Posterior cingulate gyrus (tissue), 11 donors: ENCODE measurements at regions of chr9 and their contacts with region 1.

Region 1: GRCh38 chr9:97632985-97633858 is at the starts of genes NCBP1 and TSTD2:
- DNase-seq: peak; percentile 94 to 100 (median 98)

Region 2: GRCh38 chr9:96333967-96334366 is 1299.3 kb before region 1 on chr9:
- intact Hi-C with region 1: no loop called
- DNase-seq: no peak

Region 3: GRCh38 chr9:97666907-97667686 is 33.9 kb after region 1 on chr9:
- intact Hi-C with region 1: no loop called
- DNase-seq: no peak

Region 4: DNA sequence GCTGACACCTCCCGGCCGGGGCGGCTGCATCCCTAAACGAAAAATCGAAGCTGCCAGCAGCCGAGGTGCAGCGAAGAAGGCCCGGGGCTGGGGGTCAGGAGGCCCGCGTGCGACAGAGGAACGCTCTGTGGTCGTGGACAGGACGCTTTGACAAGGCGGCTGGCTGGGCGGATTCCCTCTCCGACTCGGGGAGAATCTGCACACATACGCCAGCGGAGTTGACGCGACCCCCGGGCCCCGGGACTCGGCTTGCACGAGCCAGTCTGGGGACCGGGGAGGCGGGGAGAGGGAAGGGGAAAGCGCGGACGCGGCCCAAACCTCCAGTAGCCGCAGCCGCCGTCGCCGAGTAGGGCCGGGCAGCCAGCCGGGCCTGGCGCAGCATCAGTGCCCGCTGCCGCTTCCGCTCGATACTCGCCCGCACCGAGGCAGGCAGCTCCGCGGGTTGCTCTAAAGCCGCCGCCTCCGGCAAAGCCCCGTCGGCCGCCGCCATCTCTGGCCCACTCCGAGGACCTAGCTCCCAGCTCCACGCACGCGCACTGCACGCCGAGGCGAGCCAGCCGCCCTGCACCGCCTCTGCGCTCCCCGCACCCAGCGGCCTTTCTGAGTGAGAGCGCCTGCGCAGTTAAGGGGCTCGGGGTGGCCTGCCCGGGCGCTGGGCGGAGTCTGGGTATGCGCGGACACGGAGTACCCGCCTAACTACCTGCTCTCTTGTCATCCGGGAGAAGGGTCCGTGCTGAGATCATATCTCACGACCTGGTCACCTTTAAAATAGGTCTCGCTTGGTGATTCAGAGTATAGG is 63.8 kb after region 1 on chr9 and contains the start of gene XPA:
- intact Hi-C with region 1: loop called (anchors 2 kb)
- DNase-seq: peak; percentile 93 to 99 (median 96)